Lower leg skin (tissue), 4 donors: ENCODE measurements at regions of chr9 and their contacts with region 1.

Region 1: DNA sequence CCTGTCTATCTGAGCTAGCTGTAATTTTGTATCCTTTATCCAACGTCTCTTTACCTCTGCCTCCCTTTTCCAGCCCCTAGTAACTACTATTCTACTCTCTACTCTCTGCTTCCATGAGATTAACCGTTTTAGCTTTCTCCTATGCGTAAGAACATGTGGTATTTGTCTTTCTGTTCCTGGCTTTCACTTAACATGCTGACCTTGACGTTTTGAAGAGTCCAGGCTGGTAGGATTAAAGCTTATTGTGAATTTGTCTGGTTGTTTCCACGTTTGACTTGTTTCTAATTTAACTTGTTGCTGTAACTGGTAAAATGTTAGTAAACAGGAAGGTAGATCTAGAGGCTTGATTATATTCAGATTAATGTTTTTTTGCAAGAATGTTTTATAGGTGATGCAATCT is 385.3 kb downstream of the PSAT1 start:
- DNase-seq: no peak
- H3K4me3 ChIP-seq: no peak overlapping the region
- CTCF ChIP-seq: no peak
- POLR2A ChIP-seq: no peak

Region 2: GRCh38 chr9:78620764-78621163 is 61.5 kb before region 1 on chr9:
- intact Hi-C with region 1: no loop called
- DNase-seq: no peak
- H3K4me3 ChIP-seq: no peak overlapping the region
- CTCF ChIP-seq: no peak
- POLR2A ChIP-seq: no peak

Region 3: GRCh38 chr9:79776596-79776995 is 1094.4 kb after region 1 on chr9:
- intact Hi-C with region 1: loop called (anchors 5 kb)
- DNase-seq: no peak
- H3K4me3 ChIP-seq: no peak overlapping the region
- CTCF ChIP-seq: no peak
- POLR2A ChIP-seq: no peak